Keratinocyte (primary cell): ENCODE measurements at regions of chr11 and their contacts with region 1.

Region 1: DNA sequence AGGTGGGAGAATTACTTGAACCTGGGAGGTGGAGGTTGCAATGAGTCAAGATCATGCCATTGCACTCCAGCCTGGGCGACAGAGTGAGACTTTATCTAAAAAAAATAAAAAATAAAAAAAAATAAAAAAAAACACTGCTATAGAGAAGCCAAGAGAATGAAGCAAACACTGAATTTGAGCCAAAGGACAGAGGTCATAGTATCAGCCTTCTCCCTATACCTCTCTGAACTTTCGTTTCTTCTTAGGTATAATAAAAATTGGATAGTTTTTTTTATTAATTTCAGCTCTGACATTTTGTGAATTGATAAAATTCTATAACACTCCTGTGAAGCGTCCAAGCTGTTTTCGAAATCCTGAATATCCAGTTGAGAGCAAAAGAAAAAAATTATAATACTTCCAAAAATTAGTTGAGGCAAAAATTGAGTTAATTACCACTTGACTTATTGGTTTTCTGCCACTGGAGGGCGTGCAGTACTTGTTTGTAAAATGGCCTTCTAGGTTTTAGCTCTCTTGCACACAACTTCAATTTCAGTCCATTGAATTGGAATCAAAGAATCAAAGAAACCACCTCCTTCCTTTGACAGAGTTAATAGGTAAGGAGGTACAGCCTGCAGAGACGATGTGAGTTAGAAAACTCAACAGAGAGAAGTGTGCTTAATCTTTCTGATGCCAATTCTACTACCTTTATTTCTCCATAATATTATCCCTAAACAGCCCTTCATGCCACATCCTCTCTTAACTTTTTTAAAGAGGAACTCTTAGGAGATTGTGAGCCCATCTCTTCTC is 143.2 kb downstream of the BBOX1 start:
- DNase-seq: no peak
- H3K4me3 ChIP-seq: no peak overlapping the region
- H3K27ac ChIP-seq: no peak overlapping the region
- H3K4me1 ChIP-seq: peaks cover 6% of the 10 kb centered on the region
- H3K27me3 ChIP-seq: no peaks in the 10 kb centered on the region
- CTCF ChIP-seq: peak in 2 of 3 experiments; percentile 61 to 68

Region 2: DNA sequence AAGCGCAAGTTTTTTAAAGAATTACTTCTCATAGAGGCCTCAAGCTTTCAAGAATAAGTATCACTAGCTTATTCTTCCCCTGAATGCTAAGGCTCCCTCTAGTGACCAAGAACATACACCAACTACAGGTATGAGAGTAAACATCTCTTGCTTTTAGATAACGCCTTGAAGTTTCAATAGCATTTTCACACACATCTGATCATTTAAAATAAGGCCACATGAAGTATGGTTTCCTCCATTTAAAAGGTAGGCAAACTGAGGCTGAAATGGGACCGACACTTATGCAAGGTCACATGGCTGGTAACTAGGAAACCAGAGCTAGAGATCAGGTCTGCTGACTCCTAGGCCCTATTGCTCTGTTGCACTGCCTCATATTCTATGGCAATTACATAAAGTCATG is 112.6 kb after region 1 on chr11:
- dilution Hi-C with region 1: loop called (anchors 25 kb)
- DNase-seq: no peak
- H3K4me3 ChIP-seq: no peak overlapping the region
- H3K27ac ChIP-seq: no peak overlapping the region
- H3K4me1 ChIP-seq: peaks cover 12% of the 10 kb centered on the region
- H3K27me3 ChIP-seq: no peaks in the 10 kb centered on the region
- CTCF ChIP-seq: peak in 2 of 3 experiments; percentile 59 to 67

Region 3: DNA sequence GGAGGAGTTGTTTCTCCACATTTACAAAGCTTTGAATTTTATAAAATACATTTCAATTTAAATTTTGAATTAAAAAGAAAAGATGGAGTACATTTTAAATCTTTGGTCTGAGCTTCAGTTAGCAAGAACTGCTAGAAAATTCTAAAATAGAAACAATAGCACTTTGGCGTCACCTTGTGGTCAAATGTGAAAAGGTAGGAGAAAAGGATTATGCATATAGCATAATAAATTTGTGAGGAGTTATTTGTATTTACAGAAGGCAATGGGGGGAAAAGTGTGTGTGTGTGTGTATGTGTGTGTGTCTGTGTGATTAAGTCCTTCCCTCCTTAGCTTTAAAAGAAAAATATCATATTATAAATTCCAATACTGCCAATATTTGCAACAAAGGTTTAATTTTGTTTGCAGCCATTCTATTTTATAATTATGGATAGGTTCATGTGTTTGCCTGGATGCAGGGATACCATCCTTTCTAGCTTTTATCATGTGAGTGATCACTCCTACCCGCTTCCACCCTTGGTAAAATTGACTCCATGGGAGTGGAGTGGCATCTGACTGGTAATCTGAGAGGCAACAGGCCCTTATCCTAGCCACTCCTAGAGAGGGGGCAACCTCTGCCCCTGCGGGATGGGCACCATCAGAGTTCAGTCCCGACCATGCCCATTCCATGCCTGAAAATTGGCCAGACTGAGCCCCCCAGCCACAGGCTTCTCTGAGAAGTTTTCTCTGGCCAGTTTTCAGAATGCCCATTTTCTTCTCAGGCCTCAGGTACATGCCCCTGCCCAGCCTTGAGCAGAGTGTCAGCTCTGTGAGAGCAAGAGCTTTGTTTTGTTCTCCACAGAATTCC is 302.3 kb after region 1 on chr11:
- dilution Hi-C with region 1: loop called (anchors 25 kb)
- DNase-seq: no peak
- H3K4me3 ChIP-seq: no peak overlapping the region
- H3K27ac ChIP-seq: no peak overlapping the region
- H3K4me1 ChIP-seq: no peaks in the 10 kb centered on the region
- H3K27me3 ChIP-seq: no peaks in the 10 kb centered on the region
- CTCF ChIP-seq: peak in 2 of 3 experiments; percentile 77 to 78